ENCODE measurements at regions of chr6 and their contacts with region 1.

Region 1: DNA sequence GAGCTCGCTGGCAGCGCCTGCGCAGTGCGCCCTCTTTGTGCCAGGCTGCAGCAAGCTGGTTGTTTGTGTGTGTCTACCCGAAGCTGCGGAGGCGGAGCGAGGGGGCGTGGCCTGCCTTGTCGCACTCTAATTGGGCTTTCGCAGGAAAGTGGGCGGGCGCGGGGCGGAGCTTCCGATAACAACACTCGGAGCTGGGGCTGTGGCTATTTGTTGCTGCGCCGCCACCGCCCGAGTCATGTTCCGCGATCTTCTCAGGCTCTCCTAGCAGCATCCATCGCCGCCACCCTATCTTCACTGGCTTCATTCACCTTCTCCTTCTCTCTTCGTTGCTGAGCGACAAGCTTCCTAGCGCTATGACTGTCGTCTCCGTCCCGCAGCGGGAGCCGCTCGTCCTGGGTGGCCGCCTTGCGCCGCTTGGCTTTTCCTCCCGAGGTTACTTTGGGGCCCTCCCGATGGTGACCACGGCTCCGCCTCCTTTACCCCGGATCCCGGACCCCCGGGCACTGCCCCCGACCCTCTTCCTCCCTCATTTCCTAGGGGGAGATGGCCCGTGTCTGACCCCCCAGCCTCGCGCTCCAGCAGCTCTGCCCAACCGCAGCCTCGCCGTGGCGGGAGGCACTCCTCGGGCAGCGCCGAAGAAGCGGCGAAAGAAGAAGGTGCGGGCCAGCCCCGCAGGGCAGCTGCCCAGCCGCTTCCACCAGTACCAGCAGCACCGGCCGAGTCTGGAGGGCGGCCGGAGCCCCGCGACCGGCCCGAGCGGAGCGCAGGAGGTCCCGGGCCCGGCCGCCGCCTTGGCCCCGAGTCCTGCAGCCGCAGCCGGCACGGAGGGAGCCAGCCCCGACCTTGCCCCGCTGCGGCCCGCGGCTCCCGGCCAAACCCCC is at the start of gene PNRC1:
- DNase-seq: peak; percentile 100
- H3K4me3 ChIP-seq: peak within 1 kb of the TSS; percentile 99
- H3K27ac ChIP-seq: peak within 1 kb of the TSS; percentile 100
- H3K4me1 ChIP-seq: peaks cover 63% of the 10 kb centered on the region
- H3K27me3 ChIP-seq: no peaks in the 10 kb centered on the region
- CTCF ChIP-seq: no peak
- total RNA-seq, gene PNRC1: 180 TPM

Region 2: GRCh38 chr6:88982720-88983119 is 98.1 kb before region 1 on chr6:
- intact Hi-C with region 1: loop called (anchors 10 kb)
- DNase-seq: no peak
- H3K4me3 ChIP-seq: no peak overlapping the region
- H3K27ac ChIP-seq: no peak overlapping the region
- H3K4me1 ChIP-seq: peaks cover 8% of the 10 kb centered on the region
- H3K27me3 ChIP-seq: no peaks in the 10 kb centered on the region
- CTCF ChIP-seq: peak; percentile 84

Region 3: DNA sequence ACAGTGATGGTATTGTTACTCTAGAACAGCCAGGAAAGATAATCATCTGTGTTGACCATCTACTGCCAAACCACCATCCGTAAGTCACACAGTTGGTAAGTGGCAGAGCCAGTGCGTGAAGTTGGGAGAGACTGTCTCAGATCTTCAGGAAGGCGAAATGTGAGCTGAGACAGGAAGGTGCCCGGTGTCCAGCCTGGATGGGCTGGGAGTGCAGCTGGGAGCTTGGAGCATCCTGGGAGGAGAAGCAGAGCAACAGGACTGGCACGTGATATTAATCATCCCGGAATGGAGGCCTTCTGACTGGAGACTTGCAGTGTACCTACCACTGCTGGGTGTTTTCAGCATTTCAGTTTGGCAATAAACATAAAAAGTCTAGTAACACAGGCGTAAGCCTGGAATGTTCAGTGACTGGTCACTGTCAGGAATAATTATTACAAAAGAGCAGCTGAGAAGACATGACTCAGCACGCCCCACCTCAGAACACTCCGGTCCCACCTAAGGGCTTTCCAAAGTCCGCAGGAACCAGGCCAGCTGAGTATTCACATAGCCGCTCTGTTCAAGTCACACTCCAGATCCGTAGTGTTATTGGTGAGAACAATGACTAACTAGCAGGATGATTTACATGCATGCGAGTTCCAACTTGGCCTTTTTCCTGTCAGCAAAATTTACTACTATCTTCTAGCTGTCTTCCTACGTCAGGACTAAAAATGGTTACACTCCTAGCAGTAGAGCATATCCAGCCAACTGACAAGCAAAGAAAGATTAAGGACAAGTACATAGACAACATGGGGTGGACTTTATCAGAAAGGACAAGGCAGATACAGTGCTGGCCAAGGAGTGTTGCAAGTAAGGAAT is 45.3 kb before region 1 on chr6:
- intact Hi-C with region 1: loop called (anchors 5 kb)
- DNase-seq: peak; percentile 78
- H3K4me3 ChIP-seq: peak overlapping the region; percentile 49
- H3K27ac ChIP-seq: peak overlapping the region; percentile 94
- H3K4me1 ChIP-seq: peaks cover 48% of the 10 kb centered on the region
- H3K27me3 ChIP-seq: no peaks in the 10 kb centered on the region
- CTCF ChIP-seq: no peak

Region 4: GRCh38 chr6:89145787-89146646 is 65.2 kb after region 1 on chr6 and contains the start of gene PM20D2:
- intact Hi-C with region 1: loop called (anchors 10 kb)
- DNase-seq: peak; percentile 65
- H3K4me3 ChIP-seq: peak within 1 kb of the TSS; percentile 96
- H3K27ac ChIP-seq: peak within 1 kb of the TSS; percentile 91
- H3K4me1 ChIP-seq: peaks cover 45% of the 10 kb centered on the region
- H3K27me3 ChIP-seq: no peaks in the 10 kb centered on the region
- CTCF ChIP-seq: no peak
- total RNA-seq, gene PM20D2: 14.3 TPM

Region 5: GRCh38 chr6:90179190-90180169 is 1098.7 kb after region 1 on chr6:
- intact Hi-C with region 1: no loop called
- DNase-seq: no peak
- H3K4me3 ChIP-seq: no peak overlapping the region
- H3K27ac ChIP-seq: no peak overlapping the region
- H3K4me1 ChIP-seq: peaks cover 51% of the 10 kb centered on the region
- H3K27me3 ChIP-seq: no peaks in the 10 kb centered on the region
- CTCF ChIP-seq: peak; percentile 50